H1 (cell line): ENCODE measurements at regions of chr6 and their contacts with region 1.

Region 1: DNA sequence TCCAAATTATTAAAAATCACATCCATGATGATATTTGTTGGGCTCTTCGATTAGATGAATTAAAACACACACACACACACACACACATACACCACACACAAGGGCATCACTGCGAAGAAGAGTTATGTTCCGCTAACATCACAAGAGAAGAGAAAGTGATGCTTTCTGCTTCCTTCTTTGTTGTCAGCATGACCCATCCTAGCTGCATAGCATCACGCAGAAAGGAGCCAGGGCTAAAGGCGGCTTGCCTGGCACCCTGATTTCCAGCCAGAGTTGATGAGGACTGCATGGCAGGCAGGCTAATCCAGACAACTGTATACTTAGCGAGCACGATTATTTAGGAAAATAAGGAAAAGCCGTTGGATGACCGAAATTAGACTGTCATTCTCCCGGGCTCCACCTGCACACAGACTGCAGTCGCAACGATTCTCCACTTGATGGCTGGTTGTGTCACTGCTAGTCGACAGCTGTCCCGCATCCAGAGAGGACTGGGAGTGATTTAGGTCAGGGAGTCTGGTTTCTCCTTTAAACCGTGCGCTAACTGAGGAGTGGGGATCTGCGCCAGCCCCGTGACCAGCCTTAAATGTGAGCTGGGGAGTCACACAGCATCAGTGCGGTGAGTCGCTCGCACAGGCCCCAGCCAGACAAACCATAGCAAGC is 70.6 kb upstream of the SOX4 start:
- DNase-seq: peak; percentile 13 to 60
- H3K4me3 ChIP-seq: no peak overlapping the region
- H3K27ac ChIP-seq: no peak overlapping the region
- H3K4me1 ChIP-seq: peaks cover 0 to 2% (median 0%) of the 10 kb centered on the region in 4 experiments; a peak in 1 of 7 replicates
- H3K27me3 ChIP-seq: no peaks in the 10 kb centered on the region
- CTCF ChIP-seq: peak; percentile 47 to 73 (median 69)
- EP300 ChIP-seq: no peak
- POLR2A ChIP-seq: no peak
- RAD21 ChIP-seq: peak; percentile 68 to 78

Region 2: GRCh38 chr6:21511891-21512550 is 10.9 kb before region 1 on chr6:
- CTCF ChIA-PET with region 1: interaction called, 25 read pairs
- POLR2A ChIA-PET with region 1: no interaction called
- DNase-seq: no peak
- H3K4me3 ChIP-seq: no peak overlapping the region
- H3K27ac ChIP-seq: no peak overlapping the region
- H3K4me1 ChIP-seq: no peaks in the 10 kb centered on the region; a peak in 1 of 7 replicates
- H3K27me3 ChIP-seq: no peaks in the 10 kb centered on the region
- CTCF ChIP-seq: no peak
- EP300 ChIP-seq: no peak
- POLR2A ChIP-seq: no peak
- RAD21 ChIP-seq: no peak

Region 3: DNA sequence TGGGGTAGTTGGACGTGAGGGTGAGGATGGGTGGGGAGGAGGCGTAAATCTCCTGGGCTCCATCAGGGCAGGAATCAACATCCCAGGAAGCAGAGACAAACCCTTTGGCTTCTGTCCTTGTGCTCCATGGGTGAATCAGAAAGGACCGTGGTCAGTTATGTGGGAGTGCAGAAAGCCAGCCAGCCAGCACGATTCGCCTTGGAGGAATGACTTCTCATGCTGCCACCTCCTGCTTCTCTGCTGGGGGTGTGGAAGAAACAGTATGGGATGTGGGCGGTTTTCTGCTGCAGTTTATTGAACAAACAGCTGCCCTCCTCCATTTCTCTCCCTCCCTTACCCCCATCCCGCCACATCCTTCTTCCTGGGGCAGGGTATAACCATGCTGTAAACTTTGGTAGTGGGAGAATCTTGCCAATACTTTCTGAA is 285.1 kb after region 1 on chr6:
- CTCF ChIA-PET with region 1: no interaction called
- POLR2A ChIA-PET with region 1: no interaction called
- DNase-seq: peak in 1 of 2 experiments; percentile 39
- H3K4me3 ChIP-seq: no peak overlapping the region
- H3K27ac ChIP-seq: no peak overlapping the region
- H3K4me1 ChIP-seq: peaks cover 1 to 12% (median 4%) of the 10 kb centered on the region in 4 experiments; a peak in 3 of 7 replicates
- H3K27me3 ChIP-seq: no peaks in the 10 kb centered on the region
- CTCF ChIP-seq: no peak
- EP300 ChIP-seq: no peak
- POLR2A ChIP-seq: no peak
- RAD21 ChIP-seq: no peak